IMR-90 (cell line): ENCODE measurements at regions of chr6 and their contacts with region 1.

Region 1: GRCh38 chr6:13328076-13328874 is at the start of gene TBC1D7:
- DNase-seq: peak; percentile 88
- ATAC-seq: peak; percentile 97
- H3K4me3 ChIP-seq: peak within 1 kb of the TSS; percentile 87
- H3K27ac ChIP-seq: peak within 1 kb of the TSS; percentile 82
- H3K4me1 ChIP-seq: no peaks in the 10 kb centered on the region; the same call in none of the 2 replicates
- H3K27me3 ChIP-seq: no peaks in the 10 kb centered on the region
- CTCF ChIP-seq: no peak; the same call in 1 of the 2 replicates
- POLR2A ChIP-seq: peak; percentile 73
- RAD21 ChIP-seq: no peak; the same call in 1 of the 2 replicates
- total RNA-seq, gene TBC1D7: 14.3 and 16.4 TPM in 2 replicates

Region 2: DNA sequence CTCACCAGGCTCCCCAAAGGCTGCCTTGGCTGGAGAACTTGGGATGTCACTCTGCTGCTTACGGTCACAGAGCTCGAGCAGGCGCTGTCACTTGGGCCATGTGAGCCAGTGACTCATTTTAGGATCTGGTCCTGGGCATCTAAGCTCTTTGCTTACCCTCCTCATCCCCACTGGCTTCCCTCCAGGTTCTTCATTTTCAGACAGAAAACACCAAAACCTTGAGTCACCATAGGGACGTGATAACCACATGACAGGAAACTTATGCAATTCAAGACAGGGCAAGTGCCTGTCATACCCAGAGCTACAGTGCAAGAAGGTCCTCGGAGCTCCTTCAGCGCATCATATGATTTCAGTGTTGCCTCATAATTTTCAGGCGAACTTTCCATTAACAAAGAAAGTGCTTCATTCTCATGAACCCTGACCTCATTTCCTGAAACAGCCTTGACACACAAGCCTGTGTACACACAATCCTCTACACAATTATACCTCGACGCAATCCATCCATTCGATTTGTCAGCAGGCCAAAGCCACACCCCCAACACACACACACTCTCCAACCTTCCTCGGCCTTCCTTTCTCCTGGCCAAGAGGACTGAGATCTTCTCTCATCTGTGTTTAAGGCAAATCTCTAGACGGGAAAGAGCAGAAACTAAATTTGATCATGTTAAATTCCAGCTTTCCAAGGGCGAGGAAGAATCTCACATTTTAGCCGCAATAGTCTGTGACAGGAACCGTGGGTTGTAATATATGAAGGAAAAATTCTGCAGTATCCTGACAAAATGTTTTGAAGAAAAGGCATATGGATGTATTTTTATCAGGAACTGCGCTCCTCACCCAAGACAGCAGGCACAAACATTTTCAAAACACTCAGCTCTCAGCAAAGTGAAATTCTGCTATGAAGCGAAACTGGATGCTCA is 25.3 kb before region 1 on chr6:
- CTCF ChIA-PET with region 1: interaction called, 5 read pairs
- POLR2A ChIA-PET with region 1: interaction called, 4 read pairs
- dilution Hi-C with region 1: no loop called
- in situ Hi-C with region 1: no loop called
- intact Hi-C with region 1: loop called (anchors 1 kb)
- DNase-seq: peak; percentile 98
- ATAC-seq: peak; percentile 81
- H3K4me3 ChIP-seq: peak overlapping the region; percentile 13; the same call in 1 of the 2 replicates
- H3K27ac ChIP-seq: peak overlapping the region; percentile 84
- H3K4me1 ChIP-seq: peaks cover 10% of the 10 kb centered on the region
- H3K27me3 ChIP-seq: no peaks in the 10 kb centered on the region
- CTCF ChIP-seq: no peak
- POLR2A ChIP-seq: no peak
- RAD21 ChIP-seq: no peak

Region 3: DNA sequence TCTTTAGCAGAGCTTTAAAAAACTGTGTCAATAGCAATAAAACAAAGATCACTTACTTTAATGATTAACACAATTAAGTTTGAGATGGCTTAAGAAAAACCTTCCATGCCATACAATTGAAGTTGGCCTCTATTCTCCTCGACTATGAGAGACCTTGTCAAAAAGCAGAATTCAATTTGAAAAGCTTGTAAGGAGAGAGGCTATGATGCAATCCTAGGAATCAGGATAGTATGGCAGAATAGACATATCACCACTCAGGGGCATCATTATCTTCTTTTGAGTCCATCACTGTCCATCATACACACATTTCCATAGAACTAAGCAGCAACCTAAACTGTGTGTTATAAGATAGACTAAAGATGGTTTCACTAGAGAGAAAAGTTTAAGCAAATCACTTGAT is 17.1 kb before region 1 on chr6:
- CTCF ChIA-PET with region 1: interaction called, 5 read pairs
- POLR2A ChIA-PET with region 1: no interaction called
- dilution Hi-C with region 1: no loop called
- in situ Hi-C with region 1: no loop called
- intact Hi-C with region 1: loop called (anchors 2 kb)
- DNase-seq: no peak
- ATAC-seq: no peak
- H3K4me3 ChIP-seq: no peak overlapping the region
- H3K27ac ChIP-seq: no peak overlapping the region
- H3K4me1 ChIP-seq: no peaks in the 10 kb centered on the region
- H3K27me3 ChIP-seq: no peaks in the 10 kb centered on the region
- CTCF ChIP-seq: no peak
- POLR2A ChIP-seq: no peak
- RAD21 ChIP-seq: no peak